Posterior vena cava (tissue), 2 donors: ENCODE measurements at regions of chrX and their contacts with region 1.

Region 1: DNA sequence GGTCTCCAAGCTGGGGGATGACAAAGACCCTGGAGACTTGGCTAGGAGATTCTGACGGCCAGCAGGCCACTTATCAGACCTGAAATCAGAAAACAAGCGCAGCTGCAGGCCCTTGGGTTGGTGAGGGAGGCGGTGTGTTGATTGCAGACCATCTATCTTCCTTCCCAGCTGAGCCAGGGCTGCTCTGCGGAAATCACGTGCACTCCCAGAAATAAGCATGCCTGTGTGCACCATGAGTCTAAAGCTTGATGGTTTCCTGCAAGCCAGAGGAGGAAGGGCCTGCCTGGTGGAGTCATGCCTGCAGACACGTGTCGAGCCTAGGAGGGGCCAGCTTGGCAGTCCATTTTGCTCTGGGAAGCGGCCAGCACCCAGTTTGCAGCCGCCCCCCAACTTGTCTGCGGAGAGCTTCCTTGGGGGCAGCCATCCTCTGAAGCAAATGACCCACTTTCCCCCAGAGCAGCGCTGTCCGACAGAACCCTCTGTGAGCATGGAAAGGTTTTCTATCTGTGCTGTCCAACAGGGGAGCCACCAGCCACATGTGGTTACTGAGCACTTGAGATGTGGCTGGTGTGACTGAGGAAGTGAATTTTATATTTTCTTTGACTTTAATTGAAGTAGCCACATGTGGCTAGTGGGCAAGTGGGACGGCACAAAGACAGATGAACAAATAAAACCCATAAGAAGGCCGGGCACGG is 175.7 kb upstream of the BCOR start:
- DNase-seq: peak; percentile 82

Region 2: GRCh38 chrX:39030636-39031035 is 1242.9 kb before region 1 on chrX:
- intact Hi-C with region 1: no loop called
- DNase-seq: no peak

Region 3: GRCh38 chrX:40253771-40254170 is 19.7 kb before region 1 on chrX:
- intact Hi-C with region 1: loop called in 1 of 2 experiments (anchors 1 kb)
- DNase-seq: no peak

Region 4: DNA sequence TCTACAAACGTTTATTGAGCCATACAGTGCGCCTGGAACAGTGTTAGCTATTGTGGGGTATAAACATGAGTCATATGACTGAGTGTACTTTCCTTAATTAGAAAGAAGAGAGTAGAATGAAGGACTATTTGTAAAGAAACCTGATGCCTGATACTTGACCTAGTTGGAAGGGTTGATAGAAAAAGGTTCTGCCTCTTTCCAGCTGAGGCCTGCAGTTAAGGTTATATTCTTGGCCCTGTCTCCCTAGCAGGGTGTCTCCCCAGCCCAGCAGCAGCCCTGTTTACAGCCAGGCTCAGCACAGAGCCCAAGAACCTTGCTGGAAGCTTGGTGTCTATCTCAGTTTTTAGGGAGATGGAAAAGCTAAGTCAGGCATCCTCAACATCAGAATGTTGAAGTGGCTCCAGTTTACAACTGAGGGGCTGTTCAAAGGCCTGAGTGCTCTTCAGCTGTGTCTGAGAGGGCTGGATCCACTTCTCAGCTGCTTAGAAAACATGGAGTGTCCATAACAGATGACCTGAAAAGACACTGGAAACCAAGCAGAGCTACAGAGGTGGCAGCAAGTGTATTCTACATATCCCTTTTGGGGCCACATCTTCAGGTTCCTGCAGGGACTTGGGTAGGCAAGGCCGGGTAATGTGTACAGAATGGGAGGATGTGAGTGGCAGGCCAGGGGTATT is 1195.3 kb after region 1 on chrX:
- intact Hi-C with region 1: no loop called
- DNase-seq: no peak